Activated CD4-positive, alpha-beta memory T cell treated with anti-CD3 and anti-CD28 coated beads for 36 hours (primary cell): ENCODE measurements at regions of chr12 and their contacts with region 1.

Region 1: GRCh38 chr12:30744321-30744720 is 10.4 kb downstream of the CAPRIN2 start:
- DNase-seq: no peak
- H3K4me3 Mint-ChIP-seq: no peak overlapping the region
- H3K27ac Mint-ChIP-seq: no peak overlapping the region
- H3K4me1 Mint-ChIP-seq: no peaks in the 10 kb centered on the region
- H3K27me3 Mint-ChIP-seq: no peaks in the 10 kb centered on the region

Region 2: DNA sequence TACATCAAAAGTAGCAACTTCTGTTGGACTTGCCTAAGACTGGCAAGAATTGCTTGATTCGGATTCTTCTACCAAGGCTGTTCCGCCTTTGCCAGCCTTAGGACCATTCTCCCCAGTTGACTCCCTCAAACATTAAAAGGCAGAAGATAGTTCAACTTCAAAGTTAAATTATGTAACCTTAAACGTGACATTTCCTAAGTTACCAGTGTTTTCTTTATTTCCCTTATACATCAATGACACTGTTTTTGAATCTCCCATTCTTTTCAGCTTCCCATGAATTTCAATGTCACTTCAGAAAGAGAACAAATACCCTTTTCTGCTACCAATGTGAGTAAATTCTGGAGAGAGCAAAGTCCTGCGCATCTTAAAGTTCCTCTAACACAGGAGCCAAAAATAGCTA is 14.8 kb before region 1 on chr12:
- CTCF ChIA-PET with region 1: interaction called, 6 read pairs
- POLR2A ChIA-PET with region 1: no interaction called
- intact Hi-C with region 1: loop called (anchors 2 kb)
- DNase-seq: no peak
- H3K4me3 Mint-ChIP-seq: no peak overlapping the region
- H3K27ac Mint-ChIP-seq: no peak overlapping the region
- H3K4me1 Mint-ChIP-seq: peaks cover 5% of the 10 kb centered on the region
- H3K27me3 Mint-ChIP-seq: no peaks in the 10 kb centered on the region